WTC11 (cell line): ENCODE measurements at regions of chr1 and their contacts with region 1.

Region 1: GRCh38 chr1:154961497-154962262 is at the start of gene PYGO2:
- DNase-seq: peak; percentile 83
- ATAC-seq: peak; percentile 66
- H3K4me3 Mint-ChIP-seq: peak within 1 kb of the TSS; percentile 93
- H3K27ac Mint-ChIP-seq: peak within 1 kb of the TSS; percentile 91
- H3K4me1 Mint-ChIP-seq: peaks cover 32% of the 10 kb centered on the region
- H3K27me3 Mint-ChIP-seq: no peaks in the 10 kb centered on the region
- CTCF ChIP-seq: no peak
- total RNA-seq, gene PYGO2: 37.4 to 38.8 TPM (median 38.0 TPM) in 3 replicates

Region 2: DNA sequence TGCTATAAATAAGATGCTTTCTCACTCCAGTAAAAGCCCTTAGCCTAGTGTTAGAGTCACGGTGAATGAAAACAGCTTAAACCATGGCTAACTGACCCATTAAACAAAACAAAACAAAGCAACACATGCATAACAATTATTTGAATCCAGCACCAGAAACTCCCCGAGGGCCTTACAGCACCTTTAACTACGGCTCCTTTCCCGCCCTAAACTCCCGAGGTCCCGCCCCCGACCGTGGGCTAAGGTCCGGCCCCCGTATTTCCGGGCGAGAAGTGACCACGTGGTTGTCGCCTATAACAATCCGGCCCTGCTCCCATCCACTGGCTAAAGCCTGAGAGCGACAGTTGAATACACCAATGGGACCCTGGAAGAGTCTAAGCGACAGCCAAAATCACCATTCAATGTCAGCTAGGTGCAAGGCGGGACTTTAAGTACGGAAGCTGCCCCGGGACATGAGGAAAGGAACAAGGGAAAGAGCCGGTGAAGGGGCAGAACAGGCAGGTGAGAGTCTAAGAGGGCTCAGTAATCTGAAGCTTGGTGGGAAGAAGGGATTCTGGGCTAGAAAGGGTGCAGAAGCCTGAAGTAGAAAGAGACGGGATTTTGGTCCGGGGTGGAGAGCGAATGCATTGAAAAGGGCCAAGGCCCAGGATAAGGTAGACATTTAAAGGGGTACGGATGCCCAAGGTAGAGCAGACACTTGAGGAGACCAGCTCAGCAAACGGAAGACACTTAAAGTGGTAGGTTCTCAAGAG is 21.4 kb after region 1 on chr1 and contains the start of gene FLAD1:
- CTCF ChIA-PET with region 1: interaction called, 7 read pairs
- POLR2A ChIA-PET with region 1: interaction called, 10 read pairs
- DNase-seq: peak; percentile 98
- ATAC-seq: peak; percentile 99
- H3K4me3 Mint-ChIP-seq: no peak within 1 kb of the TSS
- H3K27ac Mint-ChIP-seq: peak within 1 kb of the TSS; percentile 70; the same call in 1 of the 2 replicates
- H3K4me1 Mint-ChIP-seq: peaks cover 10% of the 10 kb centered on the region
- H3K27me3 Mint-ChIP-seq: no peaks in the 10 kb centered on the region
- CTCF ChIP-seq: no peak
- total RNA-seq, gene FLAD1: 71.1 to 88.3 TPM (median 71.2 TPM) in 3 replicates

Region 3: DNA sequence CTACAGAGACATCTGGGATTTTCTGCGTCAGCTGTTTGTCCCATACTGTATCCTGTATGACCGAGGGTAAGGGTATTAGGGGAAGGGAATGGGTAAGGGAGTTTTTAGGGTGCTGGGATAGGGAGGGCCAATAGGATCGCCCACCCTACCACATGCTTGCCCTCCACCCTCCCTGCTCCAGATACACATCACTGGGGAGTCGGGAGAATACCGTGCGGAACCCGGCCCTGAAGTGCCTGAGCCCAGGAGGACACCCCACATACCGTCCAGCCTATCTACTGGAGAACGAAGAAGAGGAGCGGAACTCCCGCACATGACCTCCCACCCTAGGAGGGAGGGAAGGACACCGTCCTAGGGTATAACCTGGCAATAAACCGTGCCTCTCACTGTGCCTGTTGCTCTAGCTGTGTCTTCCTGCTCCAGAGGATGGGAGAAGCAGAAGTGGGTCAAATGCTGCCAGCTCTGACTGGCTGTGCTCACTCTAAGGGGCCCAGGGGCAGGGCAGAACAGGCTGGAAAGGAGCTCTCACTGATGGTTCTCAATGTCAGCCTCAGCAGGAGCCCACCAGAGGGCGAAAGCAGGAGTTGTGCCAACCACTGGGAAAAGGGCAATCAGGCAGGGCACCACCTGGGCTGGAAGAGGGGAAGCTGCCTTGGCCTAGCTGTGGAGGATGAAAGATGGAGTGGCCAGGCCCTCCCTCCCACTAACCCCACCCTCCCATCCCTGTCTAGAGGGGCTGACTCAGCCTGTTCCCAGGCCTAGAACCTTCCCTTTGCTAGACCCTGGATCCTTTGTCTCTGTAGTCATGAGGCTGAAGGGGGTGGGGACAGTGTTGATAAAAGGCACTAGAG is 31.3 kb after region 1 on chr1:
- CTCF ChIA-PET with region 1: interaction called, 176 read pairs
- POLR2A ChIA-PET with region 1: interaction called, 6 read pairs
- DNase-seq: no peak
- ATAC-seq: peak; percentile 56
- H3K4me3 Mint-ChIP-seq: no peak overlapping the region
- H3K27ac Mint-ChIP-seq: peak overlapping the region; percentile 70
- H3K4me1 Mint-ChIP-seq: peaks cover 11% of the 10 kb centered on the region; the same call in 1 of the 2 replicates
- H3K27me3 Mint-ChIP-seq: no peaks in the 10 kb centered on the region; the same call in 1 of the 2 replicates
- CTCF ChIP-seq: no peak